ENCODE measurements at regions of chr3 and their contacts with region 1.

Region 1: GRCh38 chr3:11651900-11652299 is 8.2 kb upstream of the VGLL4 start:
- DNase-seq: peak; percentile 21
- ATAC-seq: no peak
- H3K4me3 ChIP-seq: no peak overlapping the region
- H3K27ac ChIP-seq: no peak overlapping the region
- H3K4me1 ChIP-seq: no peaks in the 10 kb centered on the region
- H3K27me3 ChIP-seq: no peaks in the 10 kb centered on the region
- CTCF ChIP-seq: peak; percentile 24 to 58 (median 54); a peak in 4 of 6 replicates
- POLR2A ChIP-seq: no peak
- RAD21 ChIP-seq: peak; percentile 71

Region 2: DNA sequence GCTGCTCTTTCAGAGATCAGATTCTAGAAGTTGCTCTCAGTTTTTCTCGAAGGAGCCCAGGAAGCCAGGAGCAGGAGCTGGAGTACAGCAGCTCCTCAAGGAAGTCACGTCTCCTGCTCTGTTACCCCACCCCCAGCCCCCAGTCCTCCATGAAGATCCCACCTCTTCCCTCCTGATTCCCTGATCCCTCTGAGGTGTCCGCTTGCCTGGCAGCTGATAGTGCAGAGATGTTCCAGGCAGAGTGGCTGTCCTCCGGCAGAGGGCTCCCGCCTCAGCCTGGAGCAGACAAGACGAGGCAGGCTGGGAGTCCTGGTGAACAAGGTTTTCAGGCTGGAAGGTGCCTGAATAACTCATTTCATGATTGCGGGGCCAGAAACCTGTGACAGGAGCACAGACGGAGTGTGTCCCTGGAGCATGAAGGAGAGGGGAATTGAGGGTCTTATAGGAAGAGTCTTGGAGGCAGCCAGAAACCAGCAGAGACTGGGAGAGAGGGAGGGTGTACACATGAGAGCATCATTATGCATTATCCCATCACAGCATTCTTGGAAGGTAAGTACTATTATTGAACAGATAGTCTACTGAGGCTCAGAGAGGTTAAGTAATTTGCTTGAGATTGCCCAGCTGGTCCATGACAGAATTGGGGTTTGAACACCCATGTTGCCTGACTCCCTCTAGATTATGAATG is 496.4 kb before region 1 on chr3:
- CTCF ChIA-PET with region 1: no interaction called
- POLR2A ChIA-PET with region 1: interaction called, 3 read pairs
- RAD21 ChIA-PET with region 1: interaction called in 1 of 2 experiments, 3 read pairs
- intact Hi-C with region 1: loop called (anchors 10 kb)
- DNase-seq: peak; percentile 47
- ATAC-seq: peak; percentile 90
- H3K4me3 ChIP-seq: peak overlapping the region; percentile 48 to 77
- H3K27ac ChIP-seq: no peak overlapping the region; the same call in 1 of the 2 replicates
- H3K4me1 ChIP-seq: peaks cover 10 to 37% of the 10 kb centered on the region in 2 experiments; a peak in 3 of 4 replicates
- H3K27me3 ChIP-seq: no peaks in the 10 kb centered on the region
- CTCF ChIP-seq: peak; percentile 81 to 89 (median 85)
- POLR2A ChIP-seq: no peak
- RAD21 ChIP-seq: peak; percentile 87

Region 3: DNA sequence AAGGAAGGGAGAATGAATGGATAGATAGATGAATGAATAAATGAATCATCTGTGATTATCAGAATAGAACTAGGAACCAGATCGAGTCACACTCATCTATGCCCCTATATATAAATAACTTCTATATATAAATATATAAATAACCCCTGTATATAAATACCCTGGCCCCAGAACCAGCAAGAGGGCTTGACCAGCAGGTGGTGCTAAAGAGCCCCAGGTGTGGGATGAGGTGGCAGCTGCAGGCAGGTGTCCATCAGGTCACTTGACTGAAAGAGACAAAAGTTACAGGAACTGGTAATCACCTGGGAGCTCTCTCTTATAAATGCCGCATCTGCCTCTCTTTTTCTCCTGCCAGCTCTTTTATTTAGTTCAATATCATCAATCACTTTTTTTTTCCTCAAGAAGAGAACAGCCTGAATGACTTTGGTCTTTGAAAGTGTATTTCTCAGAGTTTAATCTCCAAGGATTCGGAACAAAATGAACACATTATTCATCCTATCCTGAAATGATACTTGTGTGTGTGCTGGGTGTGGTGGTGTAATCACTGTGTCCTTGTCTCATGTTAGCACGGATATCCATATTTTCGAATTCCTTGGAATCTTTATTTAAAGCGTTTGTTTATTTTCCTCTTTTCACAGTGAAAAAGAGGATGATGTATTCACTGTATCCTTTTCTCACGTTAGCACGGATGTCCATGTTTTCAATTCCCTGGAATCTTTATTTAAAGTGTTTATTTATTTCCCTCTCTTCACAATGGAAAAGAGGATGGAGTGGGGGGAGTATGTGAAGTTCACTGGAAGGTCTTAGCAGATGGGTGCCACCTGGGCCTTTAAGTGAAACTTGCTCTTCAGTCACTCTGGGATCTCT is 415.1 kb before region 1 on chr3:
- CTCF ChIA-PET with region 1: no interaction called
- POLR2A ChIA-PET with region 1: no interaction called
- RAD21 ChIA-PET with region 1: no interaction called
- intact Hi-C with region 1: loop called (anchors 5 kb)
- DNase-seq: peak; percentile 64
- ATAC-seq: peak; percentile 88
- H3K4me3 ChIP-seq: no peak overlapping the region
- H3K27ac ChIP-seq: no peak overlapping the region
- H3K4me1 ChIP-seq: peaks cover 3 to 41% of the 10 kb centered on the region in 2 experiments
- H3K27me3 ChIP-seq: no peaks in the 10 kb centered on the region
- CTCF ChIP-seq: peak; percentile 65 to 94 (median 78)
- POLR2A ChIP-seq: no peak
- RAD21 ChIP-seq: peak; percentile 73

Region 4: GRCh38 chr3:11379233-11379823 is 272.6 kb before region 1 on chr3:
- CTCF ChIA-PET with region 1: interaction called, 11 read pairs
- POLR2A ChIA-PET with region 1: no interaction called
- RAD21 ChIA-PET with region 1: interaction called in 1 of 2 experiments, 3 read pairs
- intact Hi-C with region 1: loop called (anchors 1 kb)
- DNase-seq: peak; percentile 32
- ATAC-seq: peak; percentile 70
- H3K4me3 ChIP-seq: no peak overlapping the region
- H3K27ac ChIP-seq: no peak overlapping the region
- H3K4me1 ChIP-seq: no peaks in the 10 kb centered on the region
- H3K27me3 ChIP-seq: no peaks in the 10 kb centered on the region
- CTCF ChIP-seq: peak; percentile 31 to 75 (median 63); a peak in 5 of 6 replicates
- POLR2A ChIP-seq: no peak
- RAD21 ChIP-seq: peak; percentile 84

Region 5: DNA sequence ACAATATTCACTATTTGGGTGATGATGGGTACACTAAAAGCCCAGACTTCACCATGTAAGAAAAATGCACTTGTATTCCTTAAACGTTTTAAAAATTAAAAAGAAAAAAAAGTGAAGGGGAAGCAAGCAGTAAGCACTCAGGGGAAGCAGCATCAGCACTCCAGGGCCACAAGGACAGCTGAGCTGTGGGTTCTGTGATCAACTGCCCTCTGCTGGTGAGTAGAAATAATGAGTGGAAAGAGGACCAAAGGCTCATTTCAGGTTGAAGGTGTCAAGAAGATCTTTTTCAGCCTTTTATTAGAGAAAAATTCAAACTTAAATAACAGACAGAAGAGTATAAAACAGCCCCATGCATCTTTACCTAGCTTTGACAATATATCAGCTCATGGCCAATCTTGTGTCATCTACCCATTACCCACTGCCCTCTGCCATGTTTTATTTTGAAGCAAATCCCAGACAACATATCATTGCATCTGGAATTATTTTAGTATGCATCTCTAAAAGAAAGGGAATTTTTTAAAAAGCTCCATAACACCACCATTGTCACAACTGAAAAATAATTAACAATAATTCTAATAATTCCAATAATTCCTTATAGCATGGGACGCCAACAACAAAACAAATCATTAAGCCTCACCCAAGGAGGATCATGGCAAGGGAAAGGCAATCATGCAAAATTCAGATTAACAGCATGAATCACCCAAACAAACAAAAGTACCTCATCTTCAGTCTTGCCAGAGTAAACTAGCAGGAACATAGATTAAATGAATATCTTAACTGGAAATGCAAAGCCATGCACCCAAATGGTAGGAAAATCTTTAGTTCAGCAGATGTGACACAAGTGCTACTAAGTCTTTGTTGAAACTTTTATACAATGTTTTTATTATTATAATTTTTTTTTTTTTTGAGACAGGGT is 152.3 kb after region 1 on chr3:
- CTCF ChIA-PET with region 1: no interaction called
- POLR2A ChIA-PET with region 1: no interaction called
- RAD21 ChIA-PET with region 1: no interaction called
- intact Hi-C with region 1: loop called (anchors 1 kb)
- DNase-seq: peak; percentile 35
- ATAC-seq: peak; percentile 88
- H3K4me3 ChIP-seq: no peak overlapping the region
- H3K27ac ChIP-seq: no peak overlapping the region
- H3K4me1 ChIP-seq: no peaks in the 10 kb centered on the region
- H3K27me3 ChIP-seq: no peaks in the 10 kb centered on the region
- CTCF ChIP-seq: peak; percentile 70 to 78 (median 72)
- POLR2A ChIP-seq: no peak
- RAD21 ChIP-seq: peak; percentile 82

Measured in HCT116 (cell line).